ENCODE measurements at regions of chr7 and their contacts with region 1.

Region 1: DNA sequence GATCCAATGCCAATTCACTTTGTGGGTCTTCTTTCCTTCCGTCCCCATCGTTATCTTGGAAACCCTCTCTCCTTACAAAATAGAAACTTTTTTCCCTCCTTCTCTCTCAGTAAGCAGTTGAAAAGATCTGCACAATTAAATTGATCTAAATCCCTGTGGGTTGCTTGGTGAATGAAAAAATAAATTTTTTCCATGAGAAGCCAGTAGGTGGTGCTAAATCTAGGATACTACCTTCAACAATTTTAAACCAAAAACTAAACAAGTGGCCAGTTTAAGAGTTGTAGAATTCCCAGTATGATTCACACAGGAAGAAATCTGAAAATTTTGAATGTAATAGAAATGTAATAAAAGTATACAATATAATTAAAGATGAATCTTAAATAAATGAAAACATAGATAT is 990.3 kb upstream of the ZNF722 start:
- DNase-seq: no peak
- ATAC-seq: no peak
- H3K4me3 ChIP-seq: no peak overlapping the region
- H3K27ac ChIP-seq: no peak overlapping the region
- H3K4me1 ChIP-seq: no peaks in the 10 kb centered on the region
- H3K27me3 ChIP-seq: no peaks in the 10 kb centered on the region
- CTCF ChIP-seq: peak in 1 of 3 experiments; percentile 14; a peak in 1 of 6 replicates
- EP300 ChIP-seq: no peak
- POLR2A ChIP-seq: no peak
- RAD21 ChIP-seq: no peak

Region 2: GRCh38 chr7:63057265-63057664 is 48.9 kb after region 1 on chr7:
- CTCF ChIA-PET with region 1: no interaction called
- POLR2A ChIA-PET with region 1: no interaction called
- in situ Hi-C with region 1: no loop called
- intact Hi-C with region 1: no loop called
- DNase-seq: no peak
- ATAC-seq: no peak
- H3K4me3 ChIP-seq: no peak overlapping the region
- H3K27ac ChIP-seq: no peak overlapping the region
- H3K4me1 ChIP-seq: no peaks in the 10 kb centered on the region
- H3K27me3 ChIP-seq: no peaks in the 10 kb centered on the region
- CTCF ChIP-seq: no peak
- EP300 ChIP-seq: no peak
- POLR2A ChIP-seq: no peak
- RAD21 ChIP-seq: no peak

Region 3: DNA sequence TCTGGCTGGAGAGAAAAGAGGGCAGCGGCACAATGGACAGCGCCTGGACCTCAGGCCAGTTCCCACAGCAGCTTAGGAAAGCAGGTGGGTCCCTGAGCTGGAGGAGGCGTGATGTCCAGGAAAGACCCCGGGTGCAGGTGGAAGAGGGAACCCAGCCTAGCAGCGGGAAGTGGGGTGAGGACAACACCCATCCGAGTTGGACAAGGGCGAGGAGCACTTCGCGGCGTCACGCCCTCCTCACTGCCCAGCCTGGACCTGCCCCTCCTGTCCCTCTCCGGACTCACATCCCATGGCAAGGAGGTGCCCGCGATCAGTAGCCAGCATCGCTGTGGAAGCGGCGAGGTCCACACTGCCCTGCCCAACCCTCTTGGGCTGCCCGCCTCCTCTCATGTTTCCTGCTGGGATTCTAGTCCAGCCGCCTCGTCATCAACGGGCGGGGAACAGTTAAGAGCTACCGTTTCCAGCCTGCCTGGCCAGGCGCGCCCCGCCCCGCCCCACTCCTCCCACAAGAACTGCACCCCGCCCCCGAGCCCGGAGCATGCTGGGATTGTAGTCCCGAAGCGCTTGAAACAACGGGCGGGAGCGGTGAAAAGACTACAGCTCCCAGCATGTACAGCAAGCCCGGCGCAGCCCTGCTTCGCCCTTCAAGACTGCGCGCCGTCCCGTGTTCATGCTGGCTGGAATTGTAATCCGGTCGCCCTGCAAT is 59.7 kb after region 1 on chr7:
- CTCF ChIA-PET with region 1: no interaction called
- POLR2A ChIA-PET with region 1: no interaction called
- in situ Hi-C with region 1: no loop called
- intact Hi-C with region 1: no loop called
- DNase-seq: peak; percentile 20 to 58 (median 26)
- ATAC-seq: peak; percentile 99
- H3K4me3 ChIP-seq: peak overlapping the region; percentile 26; the same call in 1 of the 2 replicates
- H3K27ac ChIP-seq: no peak overlapping the region
- H3K4me1 ChIP-seq: no peaks in the 10 kb centered on the region
- H3K27me3 ChIP-seq: no peaks in the 10 kb centered on the region
- CTCF ChIP-seq: no peak
- EP300 ChIP-seq: no peak
- POLR2A ChIP-seq: no peak
- RAD21 ChIP-seq: no peak

Region 4: GRCh38 chr7:63106506-63107388 is 98.4 kb after region 1 on chr7:
- CTCF ChIA-PET with region 1: no interaction called
- POLR2A ChIA-PET with region 1: no interaction called
- in situ Hi-C with region 1: no loop called
- intact Hi-C with region 1: loop called (anchors 10 kb)
- DNase-seq: no peak
- ATAC-seq: no peak
- H3K4me3 ChIP-seq: no peak overlapping the region
- H3K27ac ChIP-seq: no peak overlapping the region
- H3K4me1 ChIP-seq: no peaks in the 10 kb centered on the region
- H3K27me3 ChIP-seq: no peaks in the 10 kb centered on the region
- CTCF ChIP-seq: no peak
- EP300 ChIP-seq: no peak
- POLR2A ChIP-seq: no peak
- RAD21 ChIP-seq: no peak

Measured in K562 (cell line).